Posterior vena cava (tissue), 2 donors: ENCODE measurements at regions of chr3 and their contacts with region 1.

Region 1: DNA sequence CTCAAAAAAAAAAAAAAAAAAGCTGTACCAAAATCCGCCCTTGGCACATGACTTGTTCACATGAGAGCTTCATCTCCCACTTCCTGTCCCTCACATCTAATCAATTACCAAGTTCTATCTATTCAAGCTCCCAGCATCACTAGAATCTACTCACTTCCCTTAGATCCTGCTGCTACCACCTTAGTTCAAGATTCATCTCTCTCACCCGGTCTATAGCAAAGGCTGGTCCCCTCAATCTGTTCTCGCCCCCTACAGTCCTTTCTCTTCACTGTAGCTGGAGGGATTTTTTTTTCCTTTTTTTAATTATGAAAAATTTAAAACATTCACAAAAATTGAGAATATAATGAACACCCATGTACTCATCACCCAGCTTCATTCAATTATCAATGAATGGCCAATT is 16.7 kb upstream of the GPR160 start:
- DNase-seq: no peak

Region 2: DNA sequence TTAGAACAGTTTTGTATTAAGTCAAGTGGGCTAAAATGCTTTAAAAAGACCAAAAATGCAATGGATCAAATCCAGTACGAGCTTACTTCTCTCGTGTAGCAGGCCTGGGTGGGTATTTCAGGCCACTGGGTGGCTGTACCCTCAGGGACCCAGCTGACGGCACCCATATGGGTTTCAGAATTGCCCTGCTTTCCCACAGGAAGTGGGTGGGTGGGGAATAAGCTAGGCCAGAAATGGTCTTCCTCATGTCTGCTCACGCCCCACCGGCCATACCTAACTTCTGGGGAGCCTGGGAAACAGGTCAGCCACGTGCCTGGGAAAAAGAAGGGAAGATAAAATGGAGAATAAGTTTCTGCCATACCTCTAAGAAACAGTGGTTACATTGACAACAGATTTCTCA is 37.0 kb after region 1 on chr3:
- intact Hi-C with region 1: loop called in 1 of 2 experiments (anchors 1 kb)
- DNase-seq: no peak

Region 3: DNA sequence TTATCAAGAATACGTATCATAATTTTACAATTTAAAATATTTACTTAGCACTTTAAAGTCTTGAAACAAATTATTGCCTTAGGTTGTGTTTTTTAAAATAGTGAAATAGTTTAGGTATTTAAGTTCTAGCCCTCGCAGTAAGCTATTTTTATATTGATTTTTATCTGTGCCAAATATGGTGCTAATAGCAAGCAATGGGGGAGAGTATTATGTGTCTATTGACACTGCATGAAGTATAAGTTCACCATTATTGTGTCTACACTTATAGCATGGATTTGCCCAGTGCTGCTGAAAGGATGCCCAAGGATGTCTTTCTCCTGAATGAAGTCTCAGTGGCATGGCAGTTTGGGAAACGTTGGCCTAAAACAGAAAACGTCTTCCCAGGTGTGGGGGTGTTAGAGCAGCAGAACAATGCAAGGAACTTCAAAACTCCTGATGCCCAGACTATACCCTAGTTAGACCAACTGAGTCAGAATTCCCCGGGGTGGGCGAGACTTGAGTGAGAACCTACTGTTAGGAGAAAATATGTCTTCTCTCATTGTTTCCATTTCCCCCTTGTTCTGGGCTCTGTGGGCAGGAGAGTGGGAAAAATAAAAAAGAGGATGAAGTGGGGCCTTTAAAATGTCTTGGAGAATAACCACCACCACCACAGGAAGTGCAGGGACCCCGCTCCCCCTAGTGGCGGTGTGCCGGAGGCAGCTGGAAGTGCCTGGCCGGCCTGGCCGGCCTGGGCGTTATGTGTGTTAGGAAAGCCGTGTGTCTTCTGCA is 669.0 kb after region 1 on chr3:
- intact Hi-C with region 1: no loop called
- DNase-seq: peak; percentile 85